ENCODE measurements at regions of chr19 and their contacts with region 1.

Region 1: GRCh38 chr19:35055715-35056179 is 14.2 kb downstream of the HPN start:
- DNase-seq: no peak
- H3K4me3 Mint-ChIP-seq: no peak overlapping the region
- H3K27ac Mint-ChIP-seq: no peak overlapping the region
- H3K4me1 Mint-ChIP-seq: no peaks in the 10 kb centered on the region
- H3K27me3 Mint-ChIP-seq: peaks cover 6% of the 10 kb centered on the region

Region 2: GRCh38 chr19:34904846-34905527 is 150.8 kb before region 1 on chr19:
- CTCF ChIA-PET with region 1: no interaction called
- POLR2A ChIA-PET with region 1: no interaction called
- DNase-seq: no peak
- H3K4me3 Mint-ChIP-seq: no peak overlapping the region
- H3K27ac Mint-ChIP-seq: no peak overlapping the region
- H3K4me1 Mint-ChIP-seq: peaks cover 3% of the 10 kb centered on the region
- H3K27me3 Mint-ChIP-seq: peaks cover 31% of the 10 kb centered on the region

Region 3: DNA sequence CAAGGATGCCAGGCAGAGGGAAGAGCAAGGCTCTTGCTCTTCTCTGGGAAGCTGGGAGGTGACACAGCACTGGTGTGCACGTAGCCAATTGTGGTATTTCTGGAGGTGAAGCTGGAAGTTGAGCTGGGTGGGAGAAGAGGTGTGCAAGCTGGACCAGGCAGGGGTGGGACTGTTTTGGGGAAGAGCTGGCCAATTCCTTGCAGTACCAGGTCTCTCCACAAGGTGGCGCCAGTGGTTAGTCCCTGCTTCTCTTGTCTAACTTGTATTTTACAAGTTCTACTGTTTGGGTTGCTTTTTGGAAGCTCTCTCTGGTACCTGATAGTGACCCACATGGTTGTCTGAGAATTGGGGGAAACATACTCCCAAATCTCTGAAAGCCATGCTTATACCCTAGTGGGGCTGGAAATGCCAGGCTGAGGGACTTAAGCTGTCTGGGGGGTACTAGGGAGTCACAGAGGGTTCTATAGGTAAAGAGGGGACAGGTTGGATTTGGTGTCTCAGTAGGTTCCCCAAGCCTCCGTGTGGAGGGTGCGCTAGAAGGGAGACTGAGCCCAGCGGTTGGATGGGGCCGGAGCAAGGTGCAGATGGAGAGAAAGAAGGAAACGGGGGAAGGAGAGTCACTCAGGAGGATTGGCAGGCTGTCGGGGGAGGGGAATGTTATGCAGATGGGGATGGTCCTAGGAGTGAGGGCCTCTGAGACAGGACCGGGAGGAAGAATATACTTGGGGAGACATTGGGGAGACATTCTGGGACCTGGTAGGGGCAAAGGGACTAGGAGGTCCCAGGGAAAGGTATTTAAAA is 11.2 kb before region 1 on chr19:
- CTCF ChIA-PET with region 1: interaction called, 11 read pairs
- POLR2A ChIA-PET with region 1: no interaction called
- DNase-seq: peak; percentile 64
- H3K4me3 Mint-ChIP-seq: no peak overlapping the region
- H3K27ac Mint-ChIP-seq: no peak overlapping the region
- H3K4me1 Mint-ChIP-seq: peaks cover 28% of the 10 kb centered on the region
- H3K27me3 Mint-ChIP-seq: peaks cover 9% of the 10 kb centered on the region

Region 4: GRCh38 chr19:35204799-35205732 is 149.3 kb after region 1 on chr19:
- CTCF ChIA-PET with region 1: no interaction called
- POLR2A ChIA-PET with region 1: no interaction called
- DNase-seq: peak; percentile 27
- H3K4me3 Mint-ChIP-seq: no peak overlapping the region
- H3K27ac Mint-ChIP-seq: peak overlapping the region; percentile 97
- H3K4me1 Mint-ChIP-seq: peaks cover 73% of the 10 kb centered on the region
- H3K27me3 Mint-ChIP-seq: no peaks in the 10 kb centered on the region

Measured in activated CD4-positive, alpha-beta memory T cell treated with anti-CD3 and anti-CD28 coated beads, Interleukin-2, amount 10 ng/mL, durations not matched to agents 7 days and 5 days (primary cell).